Esophagus muscularis mucosa (tissue), 4 donors: ENCODE measurements at regions of chr1 and their contacts with region 1.

Region 1: GRCh38 chr1:155591770-155592169 is 18.2 kb upstream of the MSTO1 start:
- DNase-seq: no peak
- H3K4me3 ChIP-seq: no peak overlapping the region
- H3K27ac ChIP-seq: no peak overlapping the region
- H3K4me1 ChIP-seq: peaks cover 0 to 5% (median 5%) of the 10 kb centered on the region in 4 donors
- H3K27me3 ChIP-seq: no peaks in the 10 kb centered on the region
- CTCF ChIP-seq: peak; percentile 53 to 57 (median 54)
- EP300 ChIP-seq: no peak
- POLR2A ChIP-seq: no peak

Region 2: DNA sequence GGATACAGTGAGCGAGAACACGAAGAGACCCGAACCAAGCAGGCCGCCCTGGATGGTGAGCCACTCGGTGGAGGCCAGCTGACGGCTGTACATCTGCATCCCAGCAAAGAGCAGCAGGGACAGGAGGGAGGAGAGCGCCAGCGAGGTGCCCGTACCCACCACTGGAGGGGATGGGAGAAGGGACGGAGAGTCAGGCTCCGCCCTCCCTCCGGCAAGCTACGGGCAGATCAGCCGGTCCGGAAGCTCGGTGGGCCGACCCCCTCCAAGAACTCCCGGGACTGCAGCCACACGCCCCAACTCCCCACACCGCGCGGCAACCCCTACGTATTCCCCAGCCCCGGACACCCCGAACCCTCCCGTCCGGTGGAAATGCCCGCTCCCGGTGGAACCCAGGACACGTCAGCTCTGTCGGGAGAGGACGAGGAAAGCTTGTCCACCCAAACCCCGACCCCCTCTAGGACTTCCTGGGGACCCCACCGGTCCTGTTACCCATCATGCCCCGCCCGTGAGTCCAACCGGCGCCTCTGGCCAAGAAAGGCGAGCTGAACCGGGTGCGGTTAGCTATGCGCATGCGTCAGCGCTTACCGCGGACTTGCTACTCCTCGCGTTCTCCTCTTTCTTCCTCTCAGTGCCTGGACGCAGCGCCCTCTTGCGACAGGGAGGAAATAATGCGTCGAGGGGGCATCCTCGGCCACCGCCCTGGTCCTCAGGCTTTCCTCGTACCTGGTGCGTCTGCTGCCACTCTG is 418.9 kb before region 1 on chr1 and contains the start of gene KRTCAP2:
- intact Hi-C with region 1: loop called (anchors 5 kb)
- DNase-seq: peak; percentile 97
- H3K4me3 ChIP-seq: peak within 1 kb of the TSS; percentile 71 to 90 (median 84)
- H3K27ac ChIP-seq: peak within 1 kb of the TSS; percentile 91 to 97 (median 94)
- H3K4me1 ChIP-seq: peaks cover 26 to 61% (median 44%) of the 10 kb centered on the region in 4 donors
- H3K27me3 ChIP-seq: peaks cover 0 to 24% (median 14%) of the 10 kb centered on the region in 4 donors
- CTCF ChIP-seq: peak; percentile 94 to 99 (median 96)
- EP300 ChIP-seq: no peak
- POLR2A ChIP-seq: peak; percentile 54
- total RNA-seq, gene KRTCAP2: 76.0 to 146 (median 108) TPM

Region 3: GRCh38 chr1:155250633-155251449 is 340.9 kb before region 1 on chr1:
- intact Hi-C with region 1: loop called (anchors 2 kb)
- DNase-seq: peak; percentile 97
- H3K4me3 ChIP-seq: peak overlapping the region; percentile 30 to 37 (median 34)
- H3K27ac ChIP-seq: peak overlapping the region; percentile 62 to 69 (median 67)
- H3K4me1 ChIP-seq: peaks cover 25 to 51% (median 38%) of the 10 kb centered on the region in 4 donors
- H3K27me3 ChIP-seq: no peaks in the 10 kb centered on the region
- CTCF ChIP-seq: peak; percentile 98 to 100 (median 99)
- EP300 ChIP-seq: no peak
- POLR2A ChIP-seq: no peak

Region 4: GRCh38 chr1:155277070-155277895 is 314.5 kb before region 1 on chr1 and contains the start of gene HCN3:
- intact Hi-C with region 1: loop called (anchors 5 kb)
- DNase-seq: peak; percentile 99
- H3K4me3 ChIP-seq: peak within 1 kb of the TSS; percentile 71 to 84 (median 77)
- H3K27ac ChIP-seq: peak within 1 kb of the TSS; percentile 74 to 85 (median 78)
- H3K4me1 ChIP-seq: peaks cover 20 to 38% (median 34%) of the 10 kb centered on the region in 4 donors
- H3K27me3 ChIP-seq: no peaks in the 10 kb centered on the region
- CTCF ChIP-seq: peak; percentile 67 to 84 (median 73)
- EP300 ChIP-seq: no peak
- POLR2A ChIP-seq: no peak
- total RNA-seq, gene HCN3: 1.0 to 2.1 (median 1.4) TPM